OCI-LY7 (cell line): ENCODE measurements at regions of chr4 and their contacts with region 1.

Region 1: GRCh38 chr4:175560604-175561003 is 251.5 kb downstream of the GPM6A start:
- DNase-seq: peak; percentile 58
- H3K4me3 ChIP-seq: no peak overlapping the region
- H3K27ac ChIP-seq: no peak overlapping the region
- H3K4me1 ChIP-seq: peaks cover 8% of the 10 kb centered on the region
- CTCF ChIP-seq: peak; percentile 77

Region 2: DNA sequence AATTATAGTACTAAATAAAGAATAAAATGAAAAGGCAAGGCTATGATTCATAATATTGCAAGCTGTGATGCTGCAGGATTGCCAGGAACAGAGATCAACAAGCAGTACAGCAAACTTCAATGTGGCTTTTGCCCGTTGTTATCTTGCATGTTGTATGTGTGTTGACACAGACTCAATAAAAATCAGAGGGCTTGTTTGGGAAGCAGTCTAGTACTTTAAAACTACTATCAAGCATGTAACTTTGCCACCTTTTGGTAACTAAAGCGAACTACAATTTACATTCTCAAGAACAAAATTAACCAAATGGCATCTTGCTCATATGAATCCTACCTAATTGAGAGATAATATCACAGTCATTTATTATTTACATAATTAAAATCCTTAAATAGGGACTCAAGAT is 331.2 kb after region 1 on chr4:
- CTCF ChIA-PET with region 1: no interaction called
- POLR2A ChIA-PET with region 1: interaction called, 7 read pairs
- intact Hi-C with region 1: loop called (anchors 1 kb)
- DNase-seq: peak; percentile 68
- H3K4me3 ChIP-seq: no peak overlapping the region
- H3K27ac ChIP-seq: no peak overlapping the region
- H3K4me1 ChIP-seq: peaks cover 6% of the 10 kb centered on the region
- CTCF ChIP-seq: peak; percentile 81